ENCODE measurements at regions of chr19 and their contacts with region 1.

Region 1: DNA sequence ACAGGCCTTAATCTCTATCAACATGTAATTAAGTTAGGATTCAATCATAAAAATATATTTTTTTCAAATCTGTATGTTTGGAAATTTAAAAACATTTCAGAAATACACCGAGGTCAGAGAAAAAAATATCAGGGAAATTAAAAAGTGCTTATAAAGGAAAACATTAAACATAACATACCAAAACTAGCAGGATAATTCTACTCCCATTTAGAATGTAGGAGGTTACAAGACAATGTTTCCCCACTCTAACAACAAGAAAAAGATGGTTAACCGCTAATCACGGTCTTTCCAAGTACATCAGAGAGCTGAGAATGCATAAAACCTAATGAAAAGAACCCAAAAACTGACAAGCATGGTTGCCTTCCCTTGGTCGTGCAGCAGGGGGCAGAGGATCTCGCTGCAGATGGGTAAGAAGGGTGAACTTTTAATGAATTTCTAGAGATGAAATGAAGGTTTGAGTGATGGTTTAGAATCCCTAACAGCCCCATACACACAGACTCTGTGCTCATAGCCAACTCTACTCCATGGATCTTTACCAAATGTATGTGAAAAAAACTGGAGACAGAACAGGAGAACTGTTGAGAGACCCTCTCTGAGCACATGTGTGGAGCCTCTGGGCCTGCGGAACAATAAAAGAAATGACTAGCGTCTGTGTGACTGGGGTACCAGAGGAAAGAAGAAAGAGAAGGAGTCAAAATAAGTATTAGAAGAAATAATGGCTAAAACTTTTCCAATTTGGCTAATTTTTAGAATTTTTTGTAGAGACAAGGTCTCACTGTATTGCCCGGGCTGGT is 51.3 kb upstream of the LSM14A start:
- DNase-seq: peak; percentile 72
- H3K4me3 Mint-ChIP-seq: no peak overlapping the region
- H3K27ac Mint-ChIP-seq: no peak overlapping the region
- H3K4me1 Mint-ChIP-seq: peaks cover 12% of the 10 kb centered on the region
- H3K27me3 Mint-ChIP-seq: peaks cover 22% of the 10 kb centered on the region

Region 2: GRCh38 chr19:33982706-33983105 is 138.3 kb before region 1 on chr19:
- CTCF ChIA-PET with region 1: no interaction called
- DNase-seq: no peak
- H3K4me3 Mint-ChIP-seq: no peak overlapping the region
- H3K27ac Mint-ChIP-seq: no peak overlapping the region
- H3K4me1 Mint-ChIP-seq: no peaks in the 10 kb centered on the region
- H3K27me3 Mint-ChIP-seq: peaks cover 9% of the 10 kb centered on the region

Region 3: DNA sequence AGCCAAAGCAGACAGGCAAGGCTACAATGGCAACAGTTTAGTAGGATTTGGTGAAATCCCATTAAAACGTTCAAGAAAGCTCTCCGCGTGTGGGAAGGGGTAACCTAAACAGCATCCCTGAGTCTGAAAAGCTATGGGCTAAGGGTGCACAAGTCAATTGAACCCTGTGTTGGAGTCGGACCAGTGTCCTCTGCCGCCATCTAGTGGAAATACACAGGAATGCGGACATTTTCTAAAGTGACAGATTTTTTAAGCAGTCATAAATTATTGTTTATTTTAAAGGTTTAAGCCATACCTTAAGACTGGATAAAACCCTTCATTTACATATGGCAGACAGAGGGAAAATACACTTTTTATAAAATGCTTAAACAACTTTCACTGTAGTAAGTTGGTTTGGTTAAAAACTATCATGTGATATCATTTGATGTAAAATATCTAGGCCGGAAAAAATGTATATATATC is 24.7 kb after region 1 on chr19:
- CTCF ChIA-PET with region 1: interaction called, 10 read pairs
- DNase-seq: peak; percentile 73
- H3K4me3 Mint-ChIP-seq: no peak overlapping the region
- H3K27ac Mint-ChIP-seq: no peak overlapping the region
- H3K4me1 Mint-ChIP-seq: no peaks in the 10 kb centered on the region
- H3K27me3 Mint-ChIP-seq: peaks cover 8% of the 10 kb centered on the region

Measured in activated naive CD4-positive, alpha-beta T cell treated with anti-CD3 and anti-CD28 coated beads, Interleukin-2, amount 10 ng/mL, durations not matched to agents 7 days and 5 days (primary cell).